Activated CD8-positive, alpha-beta memory T cell treated with anti-CD3 and anti-CD28 coated beads, Interleukin-2, amount 10 ng/mL, durations not matched to agents 7 days and 5 days (primary cell): ENCODE measurements at regions of chr2 and their contacts with region 1.

Region 1: DNA sequence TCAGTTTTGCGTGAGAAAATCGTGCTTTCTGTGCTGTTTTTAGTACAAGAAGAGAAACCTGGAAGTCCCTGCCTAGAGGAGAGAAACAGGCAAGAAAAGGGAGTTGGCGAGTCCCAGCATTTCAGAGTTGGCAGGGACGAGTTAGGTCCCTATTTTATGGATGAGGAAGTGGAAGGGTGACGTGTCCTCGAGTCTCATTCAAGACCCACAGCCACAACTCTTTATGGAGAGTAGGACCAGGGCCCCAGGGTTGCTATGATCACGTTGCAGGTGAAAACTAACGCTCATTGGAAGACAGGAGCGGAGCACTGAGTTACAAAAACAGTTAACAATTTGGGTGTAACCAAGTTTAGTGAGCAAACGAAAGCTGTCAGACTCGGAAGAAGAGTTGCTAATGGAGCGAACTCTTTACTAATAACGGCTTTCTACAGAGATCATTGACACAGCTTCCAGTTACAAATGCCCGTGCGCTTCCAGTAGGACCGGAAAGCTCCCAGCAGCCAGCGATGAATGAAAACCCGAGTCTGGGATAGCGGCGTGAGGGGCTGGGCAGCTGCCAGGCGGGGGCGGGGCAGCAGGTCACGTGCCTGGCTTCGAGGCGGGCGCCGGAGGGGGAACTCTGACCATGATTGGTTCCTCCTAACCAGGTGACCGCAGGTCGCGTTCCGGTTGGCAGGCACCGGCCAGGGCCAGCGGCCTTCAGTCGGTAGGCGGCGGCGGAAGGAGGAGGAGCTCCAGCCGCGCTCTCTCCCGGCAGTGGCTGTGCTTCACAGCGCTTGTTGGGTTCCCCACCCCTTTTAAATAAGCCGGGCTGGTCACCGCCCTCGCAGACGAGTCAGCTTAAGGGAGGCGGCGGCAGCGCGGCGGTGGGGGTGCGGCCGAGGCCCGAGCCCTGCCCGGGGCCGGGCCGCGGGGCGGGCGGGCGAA is at the start of gene CCNYL1:
- DNase-seq: peak; percentile 99
- ATAC-seq: peak; percentile 99
- H3K4me3 Mint-ChIP-seq: peak within 1 kb of the TSS; percentile 91
- H3K27ac Mint-ChIP-seq: peak within 1 kb of the TSS; percentile 90
- H3K4me1 Mint-ChIP-seq: peaks cover 20% of the 10 kb centered on the region
- H3K27me3 Mint-ChIP-seq: peaks cover 5% of the 10 kb centered on the region
- total RNA-seq, gene CCNYL1: 5.8 to 5.9 TPM

Region 2: DNA sequence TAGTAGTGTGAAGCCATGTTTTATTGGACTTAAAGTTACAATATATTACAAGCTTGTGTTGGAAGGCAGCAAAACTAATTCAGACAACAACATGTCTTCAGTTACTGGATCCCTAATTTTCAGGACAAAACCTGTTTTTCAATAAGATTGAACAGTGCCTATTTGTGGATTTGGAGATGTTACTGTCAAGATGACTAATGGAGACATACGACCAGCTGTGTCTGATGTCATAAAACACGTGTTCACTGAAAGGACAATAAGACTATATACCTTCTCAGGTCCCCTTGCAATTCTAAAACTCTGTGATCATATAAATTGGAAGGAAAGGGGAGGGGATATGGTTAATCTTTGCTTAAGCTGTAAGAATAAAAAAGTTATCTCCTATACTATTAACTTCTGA is 107.6 kb before region 1 on chr2:
- CTCF ChIA-PET with region 1: no interaction called
- DNase-seq: no peak
- ATAC-seq: no peak
- H3K4me3 Mint-ChIP-seq: no peak overlapping the region
- H3K27ac Mint-ChIP-seq: no peak overlapping the region
- H3K4me1 Mint-ChIP-seq: peaks cover 20% of the 10 kb centered on the region
- H3K27me3 Mint-ChIP-seq: no peaks in the 10 kb centered on the region

Region 3: GRCh38 chr2:207692206-207693065 is 18.6 kb before region 1 on chr2:
- CTCF ChIA-PET with region 1: interaction called, 10 read pairs
- DNase-seq: peak; percentile 45
- ATAC-seq: no peak
- H3K4me3 Mint-ChIP-seq: no peak overlapping the region
- H3K27ac Mint-ChIP-seq: no peak overlapping the region
- H3K4me1 Mint-ChIP-seq: peaks cover 8% of the 10 kb centered on the region
- H3K27me3 Mint-ChIP-seq: no peaks in the 10 kb centered on the region

Region 4: GRCh38 chr2:207734264-207734635 is 23.2 kb after region 1 on chr2:
- CTCF ChIA-PET with region 1: no interaction called
- DNase-seq: no peak
- ATAC-seq: no peak
- H3K4me3 Mint-ChIP-seq: no peak overlapping the region
- H3K27ac Mint-ChIP-seq: no peak overlapping the region
- H3K4me1 Mint-ChIP-seq: peaks cover 5% of the 10 kb centered on the region
- H3K27me3 Mint-ChIP-seq: no peaks in the 10 kb centered on the region